ENCODE measurements at regions of chr5 and their contacts with region 1.

Region 1: GRCh38 chr5:148730943-148731861 is 76.9 kb upstream of the HTR4 start:
- DNase-seq: peak; percentile 23 to 77 (median 63)
- ATAC-seq: peak; percentile 98
- H3K4me3 ChIP-seq: no peak overlapping the region
- H3K4me3 Mint-ChIP-seq: peak overlapping the region in 2 of 10 donors; percentile 40 to 61
- H3K27ac ChIP-seq: no peak overlapping the region
- H3K27ac Mint-ChIP-seq: no peak overlapping the region
- H3K4me1 ChIP-seq: no peaks in the 10 kb centered on the region
- H3K4me1 Mint-ChIP-seq: peaks cover 0 to 8% (median 5%) of the 10 kb centered on the region in 7 donors
- H3K27me3 ChIP-seq: no peaks in the 10 kb centered on the region
- H3K27me3 Mint-ChIP-seq: peaks cover 4 to 25% (median 9%) of the 10 kb centered on the region in 5 donors

Region 2: DNA sequence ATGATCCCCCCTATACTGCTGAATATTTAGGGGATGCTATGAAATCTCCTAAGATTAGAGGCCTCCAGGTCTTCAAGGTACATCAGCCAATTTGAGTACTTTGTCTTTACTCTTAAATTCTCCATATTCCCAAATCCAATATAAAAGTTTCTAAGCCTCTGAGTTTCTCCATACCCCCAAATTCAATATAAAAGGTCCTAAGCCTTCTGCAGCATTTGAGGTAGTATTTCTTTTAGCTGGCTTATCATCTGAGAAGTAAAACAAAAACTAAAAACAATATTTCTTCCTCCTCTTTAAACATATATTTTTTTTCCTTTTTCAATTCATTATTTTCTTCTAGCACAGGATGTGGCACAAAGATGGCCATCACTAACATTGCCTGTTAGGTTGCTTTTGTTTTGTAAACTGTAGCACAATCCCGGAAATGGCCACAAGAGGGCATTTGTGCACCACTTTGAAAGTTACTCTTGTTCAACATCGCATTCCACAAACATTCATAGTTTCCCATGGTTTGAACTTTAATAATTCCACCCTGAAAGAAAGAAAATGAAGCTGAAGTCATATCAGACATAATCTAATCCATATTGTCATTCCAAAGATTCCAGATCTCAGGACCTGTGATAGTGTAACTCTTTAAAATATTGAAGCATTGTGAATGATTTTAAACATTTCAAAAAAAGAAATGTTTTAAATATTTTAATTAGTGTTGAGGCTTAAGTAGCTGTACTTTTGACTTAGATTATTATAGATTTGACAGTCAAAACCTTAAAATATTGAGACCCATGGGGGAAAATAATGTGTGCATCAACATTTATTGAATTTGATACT is 873.7 kb before region 1 on chr5:
- CTCF ChIA-PET with region 1: no interaction called
- POLR2A ChIA-PET with region 1: no interaction called
- intact Hi-C with region 1: loop called in 1 of 2 experiments (anchors 2 kb)
- DNase-seq: peak in 5 of 9 donors; percentile 7 to 32 (median 11)
- ATAC-seq: peak; percentile 57
- H3K4me3 ChIP-seq: no peak overlapping the region
- H3K4me3 Mint-ChIP-seq: no peak overlapping the region
- H3K27ac ChIP-seq: no peak overlapping the region
- H3K27ac Mint-ChIP-seq: no peak overlapping the region
- H3K4me1 ChIP-seq: no peaks in the 10 kb centered on the region
- H3K4me1 Mint-ChIP-seq: peaks cover 0 to 4% (median 0%) of the 10 kb centered on the region in 7 donors
- H3K27me3 ChIP-seq: peaks cover 0 to 3% of the 10 kb centered on the region in 2 donors
- H3K27me3 Mint-ChIP-seq: peaks cover 4 to 16% (median 9%) of the 10 kb centered on the region in 5 donors

Region 3: GRCh38 chr5:148443998-148444397 is 287.2 kb before region 1 on chr5:
- CTCF ChIA-PET with region 1: interaction called, 14 read pairs
- POLR2A ChIA-PET with region 1: no interaction called
- intact Hi-C with region 1: loop called in 1 of 2 experiments (anchors 1 kb)
- DNase-seq: peak in 7 of 9 donors; percentile 23 to 53 (median 41)
- ATAC-seq: peak; percentile 84
- H3K4me3 ChIP-seq: no peak overlapping the region
- H3K4me3 Mint-ChIP-seq: no peak overlapping the region
- H3K27ac ChIP-seq: no peak overlapping the region
- H3K27ac Mint-ChIP-seq: peak overlapping the region in 2 of 9 donors; percentile 12 to 40
- H3K4me1 ChIP-seq: no peaks in the 10 kb centered on the region
- H3K4me1 Mint-ChIP-seq: peaks cover 0 to 5% (median 0%) of the 10 kb centered on the region in 7 donors
- H3K27me3 ChIP-seq: no peaks in the 10 kb centered on the region
- H3K27me3 Mint-ChIP-seq: peaks cover 0 to 2% (median 0%) of the 10 kb centered on the region in 5 donors

Region 4: DNA sequence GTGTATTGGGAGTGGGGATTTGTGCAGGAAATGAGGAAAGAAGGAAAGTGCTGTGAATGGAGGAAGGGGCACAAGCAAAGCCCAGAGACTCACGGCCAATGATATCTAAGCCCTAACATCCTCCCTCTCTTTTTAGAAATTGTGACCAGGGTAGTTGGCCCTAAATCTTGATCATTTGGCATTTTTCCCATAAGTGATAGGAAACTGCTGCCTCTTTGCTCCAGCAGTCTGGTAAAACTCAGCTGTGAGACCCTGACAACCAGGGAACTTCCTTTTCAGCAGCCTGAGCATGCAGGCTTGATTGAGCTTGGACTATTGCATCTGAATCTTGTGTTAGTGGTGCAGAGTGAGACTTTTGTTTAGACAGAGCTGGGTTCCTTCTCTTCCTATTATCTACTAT is 85.6 kb after region 1 on chr5:
- CTCF ChIA-PET with region 1: no interaction called
- POLR2A ChIA-PET with region 1: no interaction called
- intact Hi-C with region 1: no loop called
- DNase-seq: no peak
- ATAC-seq: no peak
- H3K4me3 ChIP-seq: no peak overlapping the region
- H3K4me3 Mint-ChIP-seq: no peak overlapping the region
- H3K27ac ChIP-seq: no peak overlapping the region
- H3K27ac Mint-ChIP-seq: no peak overlapping the region
- H3K4me1 ChIP-seq: no peaks in the 10 kb centered on the region
- H3K4me1 Mint-ChIP-seq: peaks cover under 1 to 13% (median 4%) of the 10 kb centered on the region in 7 donors
- H3K27me3 ChIP-seq: no peaks in the 10 kb centered on the region
- H3K27me3 Mint-ChIP-seq: peaks cover 0 to 22% (median 0%) of the 10 kb centered on the region in 5 donors

Region 5: GRCh38 chr5:148957591-148958202 is 226.5 kb after region 1 on chr5:
- CTCF ChIA-PET with region 1: interaction called, 29 read pairs
- POLR2A ChIA-PET with region 1: no interaction called
- intact Hi-C with region 1: loop called in 1 of 2 experiments (anchors 1 kb)
- DNase-seq: peak in 6 of 9 donors; percentile 12 to 31 (median 20)
- ATAC-seq: peak; percentile 57
- H3K4me3 ChIP-seq: no peak overlapping the region
- H3K4me3 Mint-ChIP-seq: no peak overlapping the region
- H3K27ac ChIP-seq: no peak overlapping the region
- H3K27ac Mint-ChIP-seq: no peak overlapping the region
- H3K4me1 ChIP-seq: no peaks in the 10 kb centered on the region
- H3K4me1 Mint-ChIP-seq: no peaks in the 10 kb centered on the region
- H3K27me3 ChIP-seq: no peaks in the 10 kb centered on the region
- H3K27me3 Mint-ChIP-seq: peaks cover 0 to 17% (median 5%) of the 10 kb centered on the region in 5 donors

Region 6: GRCh38 chr5:149035372-149035790 is 304.2 kb after region 1 on chr5:
- CTCF ChIA-PET with region 1: interaction called, 44 read pairs
- POLR2A ChIA-PET with region 1: no interaction called
- intact Hi-C with region 1: loop called (anchors 1 kb)
- DNase-seq: peak; percentile 26 to 65 (median 52)
- ATAC-seq: peak; percentile 80
- H3K4me3 ChIP-seq: no peak overlapping the region
- H3K4me3 Mint-ChIP-seq: no peak overlapping the region
- H3K27ac ChIP-seq: no peak overlapping the region
- H3K27ac Mint-ChIP-seq: no peak overlapping the region
- H3K4me1 ChIP-seq: no peaks in the 10 kb centered on the region
- H3K4me1 Mint-ChIP-seq: peaks cover 0 to 19% (median 0%) of the 10 kb centered on the region in 7 donors
- H3K27me3 ChIP-seq: no peaks in the 10 kb centered on the region
- H3K27me3 Mint-ChIP-seq: peaks cover 0 to 9% (median 5%) of the 10 kb centered on the region in 5 donors

Region 7: GRCh38 chr5:149561848-149562247 is 830.6 kb after region 1 on chr5:
- CTCF ChIA-PET with region 1: no interaction called
- POLR2A ChIA-PET with region 1: no interaction called
- intact Hi-C with region 1: loop called in 1 of 2 experiments (anchors 1 kb)
- DNase-seq: no peak
- ATAC-seq: no peak
- H3K4me3 ChIP-seq: no peak overlapping the region
- H3K4me3 Mint-ChIP-seq: peak overlapping the region in 8 of 10 donors; percentile 4 to 67 (median 56)
- H3K27ac ChIP-seq: peak overlapping the region; percentile 50
- H3K27ac Mint-ChIP-seq: peak overlapping the region; percentile 57 to 84 (median 74)
- H3K4me1 ChIP-seq: peaks cover 0 to 17% of the 10 kb centered on the region in 2 donors
- H3K4me1 Mint-ChIP-seq: peaks cover 14 to 36% (median 25%) of the 10 kb centered on the region in 7 donors
- H3K27me3 ChIP-seq: no peaks in the 10 kb centered on the region
- H3K27me3 Mint-ChIP-seq: no peaks in the 10 kb centered on the region

Measured in naive thymus-derived CD4-positive, alpha-beta T cell (primary cell).